Mammary epithelial cell (primary cell): ENCODE measurements at regions of chr12 and their contacts with region 1.

Region 1: GRCh38 chr12:4116251-4117111 is 157.1 kb upstream of the CCND2 start:
- DNase-seq: peak; percentile 80
- H3K4me3 ChIP-seq: no peak overlapping the region
- H3K27ac ChIP-seq: no peak overlapping the region
- H3K4me1 ChIP-seq: peaks cover 60% of the 10 kb centered on the region
- H3K27me3 ChIP-seq: no peaks in the 10 kb centered on the region
- CTCF ChIP-seq: no peak

Region 2: GRCh38 chr12:4143896-4144295 is 27.4 kb after region 1 on chr12:
- CTCF ChIA-PET with region 1: no interaction called
- dilution Hi-C with region 1: no loop called
- in situ Hi-C with region 1: no loop called
- intact Hi-C with region 1: loop called (anchors 2 kb)
- DNase-seq: peak; percentile 43
- H3K4me3 ChIP-seq: no peak overlapping the region
- H3K27ac ChIP-seq: no peak overlapping the region
- H3K4me1 ChIP-seq: peaks cover 18% of the 10 kb centered on the region
- H3K27me3 ChIP-seq: no peaks in the 10 kb centered on the region
- CTCF ChIP-seq: peak in 1 of 2 donors; percentile 18

Region 3: GRCh38 chr12:4157122-4157521 is 40.6 kb after region 1 on chr12:
- CTCF ChIA-PET with region 1: no interaction called
- dilution Hi-C with region 1: no loop called
- in situ Hi-C with region 1: no loop called
- intact Hi-C with region 1: loop called (anchors 1 kb)
- DNase-seq: peak; percentile 44
- H3K4me3 ChIP-seq: no peak overlapping the region
- H3K27ac ChIP-seq: no peak overlapping the region
- H3K4me1 ChIP-seq: peaks cover 14% of the 10 kb centered on the region
- H3K27me3 ChIP-seq: no peaks in the 10 kb centered on the region
- CTCF ChIP-seq: no peak